Activated naive CD4-positive, alpha-beta T cell treated with anti-CD3 and anti-CD28 coated beads for 36 hours (primary cell): ENCODE measurements at regions of chr3 and their contacts with region 1.

Region 1: GRCh38 chr3:42804106-42804830 is at the start of gene HIGD1A:
- DNase-seq: peak; percentile 95
- H3K4me3 Mint-ChIP-seq: peak within 1 kb of the TSS; percentile 96
- H3K27ac Mint-ChIP-seq: peak within 1 kb of the TSS; percentile 86
- H3K4me1 Mint-ChIP-seq: peaks cover 42% of the 10 kb centered on the region
- H3K27me3 Mint-ChIP-seq: peaks cover 11% of the 10 kb centered on the region
- total RNA-seq, gene HIGD1A: 57.1 to 66.4 TPM

Region 2: DNA sequence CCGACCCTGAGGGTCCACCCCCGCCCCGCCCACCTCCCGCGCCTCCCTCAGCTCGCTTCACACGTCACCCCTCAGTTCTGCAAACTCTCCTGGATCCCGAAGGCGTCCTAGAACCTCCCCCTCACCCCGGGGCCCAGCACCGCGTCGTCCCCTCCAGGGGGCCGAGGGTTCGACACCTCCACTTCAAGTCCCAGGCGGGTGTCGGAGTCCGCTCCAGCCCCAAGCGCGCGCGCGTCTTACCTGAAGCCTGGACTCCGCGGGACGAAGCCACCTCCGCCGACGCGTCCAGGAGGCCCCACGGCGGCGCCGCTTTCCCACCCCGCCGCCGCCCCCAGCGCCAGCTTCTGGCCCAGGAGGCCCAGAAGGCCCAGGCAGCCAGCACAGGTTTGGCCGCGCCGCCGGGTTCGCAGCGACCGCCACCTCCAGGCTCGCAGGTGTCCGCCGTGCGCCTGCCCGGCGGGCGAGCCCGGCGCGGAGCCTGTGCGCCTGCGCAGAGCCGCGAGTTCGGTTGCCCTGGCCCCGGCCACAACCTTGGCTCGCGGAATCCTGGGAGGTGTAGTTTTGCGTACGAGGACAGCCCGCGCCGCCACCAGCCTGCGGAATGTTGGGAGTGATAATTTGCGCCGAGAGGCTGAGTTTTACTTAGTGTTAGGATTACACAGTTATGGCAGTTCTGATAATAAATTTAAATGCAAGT is 301.5 kb after region 1 on chr3 and contains the start of gene POMGNT2:
- CTCF ChIA-PET with region 1: no interaction called
- intact Hi-C with region 1: loop called (anchors 10 kb)
- DNase-seq: peak; percentile 93
- H3K4me3 Mint-ChIP-seq: peak within 1 kb of the TSS; percentile 77
- H3K27ac Mint-ChIP-seq: no peak within 1 kb of the TSS
- H3K4me1 Mint-ChIP-seq: peaks cover 20% of the 10 kb centered on the region
- H3K27me3 Mint-ChIP-seq: no peaks in the 10 kb centered on the region
- total RNA-seq, gene POMGNT2: 7.6 to 8.0 TPM